Naive thymus-derived CD4-positive, alpha-beta T cell (primary cell): ENCODE measurements at regions of chr6 and their contacts with region 1.

Region 1: DNA sequence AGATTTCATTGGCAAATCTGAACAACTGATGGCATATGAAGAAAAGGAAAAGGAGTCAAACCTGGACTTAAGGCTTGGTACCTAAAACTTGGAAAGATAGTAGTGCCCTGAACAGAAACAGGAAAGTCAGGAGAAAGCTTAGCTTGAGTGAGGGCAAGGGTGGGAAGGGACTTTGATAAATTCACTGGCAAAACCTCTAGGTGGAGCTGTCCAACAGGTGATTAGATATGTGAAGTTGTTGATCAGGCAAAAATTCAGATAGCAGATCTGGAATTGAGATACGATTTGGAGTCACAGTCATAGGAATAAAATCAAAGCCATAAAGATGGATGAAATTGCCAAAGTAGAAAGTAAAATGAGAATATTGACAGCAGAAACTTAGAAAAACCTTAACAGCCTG is 16.1 kb upstream of the ZNF292 start:
- DNase-seq: peak in 7 of 9 donors; percentile 42 to 72 (median 65)
- ATAC-seq: peak; percentile 82
- H3K4me3 ChIP-seq: no peak overlapping the region
- H3K4me3 Mint-ChIP-seq: peak overlapping the region in 1 of 10 donors; percentile 12
- H3K27ac ChIP-seq: no peak overlapping the region
- H3K27ac Mint-ChIP-seq: no peak overlapping the region
- H3K4me1 ChIP-seq: no peaks in the 10 kb centered on the region
- H3K4me1 Mint-ChIP-seq: peaks cover 0 to 6% (median 4%) of the 10 kb centered on the region in 7 donors
- H3K27me3 ChIP-seq: no peaks in the 10 kb centered on the region
- H3K27me3 Mint-ChIP-seq: peaks cover 0 to 59% (median 18%) of the 10 kb centered on the region in 5 donors

Region 2: GRCh38 chr6:87012035-87012434 is 127.2 kb before region 1 on chr6:
- CTCF ChIA-PET with region 1: no interaction called
- POLR2A ChIA-PET with region 1: no interaction called
- intact Hi-C with region 1: no loop called
- DNase-seq: no peak
- ATAC-seq: no peak
- H3K4me3 ChIP-seq: no peak overlapping the region
- H3K4me3 Mint-ChIP-seq: no peak overlapping the region
- H3K27ac ChIP-seq: no peak overlapping the region
- H3K27ac Mint-ChIP-seq: no peak overlapping the region
- H3K4me1 ChIP-seq: no peaks in the 10 kb centered on the region
- H3K4me1 Mint-ChIP-seq: no peaks in the 10 kb centered on the region
- H3K27me3 ChIP-seq: peaks cover 0 to 2% of the 10 kb centered on the region in 2 donors
- H3K27me3 Mint-ChIP-seq: peaks cover 0 to 6% (median 2%) of the 10 kb centered on the region in 5 donors

Region 3: DNA sequence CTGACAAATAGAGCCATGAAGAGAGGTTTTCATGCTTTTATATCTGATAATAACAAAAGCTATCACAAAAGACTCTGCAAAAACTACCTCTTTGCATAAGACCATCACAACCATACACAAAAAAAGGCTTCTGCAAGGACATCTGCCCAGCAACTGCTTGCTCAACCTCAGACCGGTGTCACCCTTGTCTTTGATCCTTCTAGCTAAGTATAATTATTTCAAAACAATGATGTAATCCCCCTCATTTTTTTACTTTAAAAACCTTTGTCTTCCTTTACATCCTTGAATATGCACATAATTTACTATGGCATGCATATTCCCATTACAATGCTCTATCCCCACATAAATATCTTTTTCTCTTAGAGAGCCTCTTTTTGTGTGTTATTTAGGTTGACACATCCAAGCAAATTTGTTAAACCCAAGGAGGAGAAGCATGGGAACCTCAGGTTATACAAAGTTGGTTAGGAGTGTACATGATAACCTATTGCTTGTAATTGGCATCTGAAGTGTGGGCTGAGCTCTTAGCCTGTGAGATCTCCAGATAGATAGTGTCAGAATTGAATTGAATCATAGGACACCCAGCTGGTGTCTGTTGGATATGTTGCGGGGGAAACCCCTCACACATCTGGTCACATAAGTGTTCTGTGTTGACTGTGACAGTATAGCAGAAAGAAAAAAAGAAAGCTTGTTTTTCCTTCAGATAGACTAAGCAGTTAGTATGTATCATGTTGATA is 23.7 kb before region 1 on chr6:
- CTCF ChIA-PET with region 1: no interaction called
- POLR2A ChIA-PET with region 1: no interaction called
- intact Hi-C with region 1: no loop called
- DNase-seq: no peak
- ATAC-seq: no peak
- H3K4me3 ChIP-seq: no peak overlapping the region
- H3K4me3 Mint-ChIP-seq: no peak overlapping the region
- H3K27ac ChIP-seq: no peak overlapping the region
- H3K27ac Mint-ChIP-seq: no peak overlapping the region
- H3K4me1 ChIP-seq: no peaks in the 10 kb centered on the region
- H3K4me1 Mint-ChIP-seq: no peaks in the 10 kb centered on the region
- H3K27me3 ChIP-seq: no peaks in the 10 kb centered on the region
- H3K27me3 Mint-ChIP-seq: peaks cover 3 to 52% (median 22%) of the 10 kb centered on the region in 5 donors

Region 4: DNA sequence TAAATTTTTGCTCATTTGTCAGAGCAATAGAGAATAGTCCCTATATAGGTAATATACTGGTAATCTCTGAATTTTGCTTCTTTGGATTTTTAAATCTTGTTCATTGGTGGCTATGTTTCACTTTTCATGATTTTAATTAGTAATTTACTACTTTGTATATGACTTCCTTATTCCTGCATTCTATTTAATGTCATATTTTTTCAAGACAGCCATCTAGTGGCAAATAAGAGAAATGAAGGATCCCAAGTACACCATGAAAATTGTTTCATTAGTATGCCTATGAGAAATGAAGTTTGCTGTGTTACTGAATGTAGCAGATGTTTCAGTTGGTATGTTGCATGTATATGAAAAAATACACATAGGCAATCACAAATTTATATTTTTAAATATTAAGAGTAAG is 98.6 kb after region 1 on chr6:
- CTCF ChIA-PET with region 1: interaction called, 10 read pairs
- POLR2A ChIA-PET with region 1: no interaction called
- intact Hi-C with region 1: loop called (anchors 1 kb)
- DNase-seq: peak in 4 of 9 donors; percentile 6 to 23 (median 18)
- ATAC-seq: peak; percentile 66
- H3K4me3 ChIP-seq: no peak overlapping the region
- H3K4me3 Mint-ChIP-seq: no peak overlapping the region
- H3K27ac ChIP-seq: no peak overlapping the region
- H3K27ac Mint-ChIP-seq: no peak overlapping the region
- H3K4me1 ChIP-seq: no peaks in the 10 kb centered on the region
- H3K4me1 Mint-ChIP-seq: peaks cover 0 to 7% (median 3%) of the 10 kb centered on the region in 7 donors
- H3K27me3 ChIP-seq: no peaks in the 10 kb centered on the region
- H3K27me3 Mint-ChIP-seq: no peaks in the 10 kb centered on the region

Region 5: DNA sequence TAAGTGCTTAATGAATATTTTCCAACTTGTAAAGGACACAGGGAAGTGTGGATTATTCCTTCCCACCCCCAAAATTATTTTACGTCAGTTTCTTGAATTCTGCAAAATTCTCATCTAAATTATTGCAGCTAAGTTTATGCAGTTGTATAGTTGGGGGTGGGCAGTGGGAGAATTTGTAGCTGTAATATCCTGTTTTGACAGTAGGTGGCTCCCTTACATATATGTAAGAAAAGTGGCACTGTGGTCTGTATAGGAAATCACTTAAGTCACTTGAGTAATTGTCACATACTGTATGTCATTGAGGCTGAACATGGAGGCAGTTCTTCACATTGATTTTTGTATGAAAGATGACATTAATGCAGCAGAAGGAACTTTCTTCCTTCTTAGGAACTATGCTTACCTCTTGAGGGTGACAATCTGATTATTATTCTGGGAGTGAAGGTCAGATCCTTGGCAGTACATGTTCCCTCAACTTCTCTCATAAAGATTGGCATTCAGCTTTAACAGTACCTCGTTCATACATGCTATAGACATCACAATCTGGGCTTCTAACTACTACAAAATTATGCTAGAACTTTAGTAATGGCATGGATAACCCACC is 253.9 kb after region 1 on chr6:
- CTCF ChIA-PET with region 1: interaction called, 3 read pairs
- POLR2A ChIA-PET with region 1: no interaction called
- intact Hi-C with region 1: loop called (anchors 1 to 2 kb)
- DNase-seq: peak in 7 of 9 donors; percentile 43 to 63 (median 62)
- ATAC-seq: peak; percentile 96
- H3K4me3 ChIP-seq: no peak overlapping the region
- H3K4me3 Mint-ChIP-seq: no peak overlapping the region
- H3K27ac ChIP-seq: no peak overlapping the region
- H3K27ac Mint-ChIP-seq: no peak overlapping the region
- H3K4me1 ChIP-seq: no peaks in the 10 kb centered on the region
- H3K4me1 Mint-ChIP-seq: peaks cover 0 to 3% (median 0%) of the 10 kb centered on the region in 7 donors
- H3K27me3 ChIP-seq: no peaks in the 10 kb centered on the region
- H3K27me3 Mint-ChIP-seq: no peaks in the 10 kb centered on the region

Region 6: DNA sequence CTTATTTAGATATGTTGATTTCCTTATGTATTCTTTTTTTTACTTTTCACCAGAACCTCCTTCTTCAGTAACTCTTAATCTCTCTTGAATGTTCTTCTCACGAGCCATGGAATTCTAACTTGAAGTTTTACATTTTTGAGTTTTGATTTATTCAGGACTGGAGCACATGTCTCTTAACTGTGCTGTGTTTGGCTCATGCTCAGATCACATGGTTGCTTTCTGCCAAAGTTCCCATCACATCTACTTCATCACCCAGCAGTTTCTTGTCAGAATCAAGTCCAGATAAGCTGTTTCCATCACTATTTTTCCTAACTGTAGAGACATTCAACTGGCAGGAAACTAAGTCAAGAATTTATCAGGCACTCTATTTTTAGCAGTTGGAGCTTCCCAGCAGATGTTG is 365.2 kb after region 1 on chr6:
- CTCF ChIA-PET with region 1: no interaction called
- POLR2A ChIA-PET with region 1: no interaction called
- intact Hi-C with region 1: loop called in 1 of 2 experiments (anchors 10 kb)
- DNase-seq: no peak
- ATAC-seq: no peak
- H3K4me3 ChIP-seq: no peak overlapping the region
- H3K4me3 Mint-ChIP-seq: no peak overlapping the region
- H3K27ac ChIP-seq: no peak overlapping the region
- H3K27ac Mint-ChIP-seq: peak overlapping the region in 8 of 9 donors; percentile 10 to 81 (median 45)
- H3K4me1 ChIP-seq: no peaks in the 10 kb centered on the region
- H3K4me1 Mint-ChIP-seq: peaks cover 0 to 13% (median 9%) of the 10 kb centered on the region in 7 donors
- H3K27me3 ChIP-seq: no peaks in the 10 kb centered on the region
- H3K27me3 Mint-ChIP-seq: no peaks in the 10 kb centered on the region

Region 7: GRCh38 chr6:88870717-88871330 is 1731.6 kb after region 1 on chr6:
- CTCF ChIA-PET with region 1: no interaction called
- POLR2A ChIA-PET with region 1: no interaction called
- intact Hi-C with region 1: loop called in 1 of 2 experiments (anchors 1 kb)
- DNase-seq: peak in 7 of 9 donors; percentile 12 to 54 (median 47)
- ATAC-seq: peak; percentile 60
- H3K4me3 ChIP-seq: no peak overlapping the region
- H3K4me3 Mint-ChIP-seq: no peak overlapping the region
- H3K27ac ChIP-seq: no peak overlapping the region
- H3K27ac Mint-ChIP-seq: no peak overlapping the region
- H3K4me1 ChIP-seq: no peaks in the 10 kb centered on the region
- H3K4me1 Mint-ChIP-seq: peaks cover 15 to 46% (median 29%) of the 10 kb centered on the region in 7 donors
- H3K27me3 ChIP-seq: no peaks in the 10 kb centered on the region
- H3K27me3 Mint-ChIP-seq: no peaks in the 10 kb centered on the region